CD8-positive, alpha-beta T cell (primary cell): ENCODE measurements at regions of chr1 and their contacts with region 1.

Region 1: GRCh38 chr1:32063261-32063681 is 9.5 kb upstream of the TMEM39B start:
- DNase-seq: peak in 2 of 9 experiments; percentile 45 to 58
- ATAC-seq: peak; percentile 71
- H3K4me3 ChIP-seq: no peak overlapping the region
- H3K4me3 Mint-ChIP-seq: no peak overlapping the region
- H3K27ac ChIP-seq: no peak overlapping the region
- H3K27ac Mint-ChIP-seq: peak overlapping the region; percentile 0
- H3K4me1 ChIP-seq: peaks cover 12% of the 10 kb centered on the region
- H3K4me1 Mint-ChIP-seq: peaks cover 13% of the 10 kb centered on the region
- H3K27me3 ChIP-seq: no peaks in the 10 kb centered on the region
- H3K27me3 Mint-ChIP-seq: no peaks in the 10 kb centered on the region
- CTCF ChIP-seq: peak; percentile 63

Region 2: DNA sequence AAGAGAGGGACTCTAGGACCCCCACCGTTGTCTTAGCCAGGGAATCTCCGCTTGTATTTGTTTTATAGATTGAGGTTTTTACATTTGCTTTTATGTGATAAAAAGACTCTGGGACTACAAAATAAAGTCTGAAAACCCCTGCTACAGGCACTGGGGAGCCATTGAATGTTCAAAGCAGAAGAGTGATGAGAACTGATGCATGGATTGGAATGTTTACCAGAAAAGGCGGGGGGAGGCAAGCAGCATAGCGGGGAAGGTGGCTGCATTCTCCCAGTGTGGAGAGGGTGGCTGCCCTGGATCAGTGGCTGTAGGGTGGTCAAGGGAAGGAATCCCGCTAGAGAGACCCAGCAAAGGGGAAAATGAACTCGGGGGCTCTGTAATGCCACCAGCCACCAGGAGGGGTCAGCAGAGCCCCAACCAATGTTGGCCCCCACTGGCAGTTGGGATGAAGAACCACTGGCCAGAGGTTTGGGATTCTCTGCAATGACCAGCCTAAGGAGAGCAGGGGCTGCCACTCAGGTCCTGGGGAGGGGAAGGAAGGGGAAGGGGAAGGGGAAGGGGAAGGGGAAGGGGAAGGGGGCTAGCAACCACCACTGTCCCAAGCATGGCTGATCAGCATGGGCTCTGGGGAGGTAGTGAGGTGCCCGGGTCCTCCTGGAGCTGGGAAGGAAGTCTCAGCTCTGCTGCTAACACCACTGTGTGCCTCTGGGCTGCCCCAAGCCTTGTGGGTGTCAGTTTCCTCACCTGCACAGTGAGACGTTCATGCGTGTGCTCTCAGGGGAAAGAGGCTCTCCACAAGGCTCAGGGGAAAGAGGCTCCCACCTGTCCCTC is 399.4 kb before region 1 on chr1:
- CTCF ChIA-PET with region 1: interaction called, 7 read pairs
- POLR2A ChIA-PET with region 1: no interaction called
- intact Hi-C with region 1: loop called in 1 of 2 experiments (anchors 1 kb)
- DNase-seq: peak; percentile 18 to 79 (median 59)
- ATAC-seq: peak; percentile 72
- H3K4me3 ChIP-seq: no peak overlapping the region
- H3K4me3 Mint-ChIP-seq: no peak overlapping the region
- H3K27ac ChIP-seq: no peak overlapping the region
- H3K27ac Mint-ChIP-seq: no peak overlapping the region
- H3K4me1 ChIP-seq: no peaks in the 10 kb centered on the region
- H3K4me1 Mint-ChIP-seq: no peaks in the 10 kb centered on the region
- H3K27me3 ChIP-seq: no peaks in the 10 kb centered on the region
- H3K27me3 Mint-ChIP-seq: peaks cover 3% of the 10 kb centered on the region
- CTCF ChIP-seq: peak; percentile 70

Region 3: GRCh38 chr1:31781756-31782371 is 281.4 kb before region 1 on chr1:
- CTCF ChIA-PET with region 1: no interaction called
- POLR2A ChIA-PET with region 1: no interaction called
- intact Hi-C with region 1: no loop called
- DNase-seq: no peak
- ATAC-seq: no peak
- H3K4me3 ChIP-seq: no peak overlapping the region
- H3K4me3 Mint-ChIP-seq: no peak overlapping the region
- H3K27ac ChIP-seq: no peak overlapping the region
- H3K27ac Mint-ChIP-seq: no peak overlapping the region
- H3K4me1 ChIP-seq: no peaks in the 10 kb centered on the region
- H3K4me1 Mint-ChIP-seq: no peaks in the 10 kb centered on the region
- H3K27me3 ChIP-seq: no peaks in the 10 kb centered on the region
- H3K27me3 Mint-ChIP-seq: peaks cover 11% of the 10 kb centered on the region
- CTCF ChIP-seq: no peak

Region 4: DNA sequence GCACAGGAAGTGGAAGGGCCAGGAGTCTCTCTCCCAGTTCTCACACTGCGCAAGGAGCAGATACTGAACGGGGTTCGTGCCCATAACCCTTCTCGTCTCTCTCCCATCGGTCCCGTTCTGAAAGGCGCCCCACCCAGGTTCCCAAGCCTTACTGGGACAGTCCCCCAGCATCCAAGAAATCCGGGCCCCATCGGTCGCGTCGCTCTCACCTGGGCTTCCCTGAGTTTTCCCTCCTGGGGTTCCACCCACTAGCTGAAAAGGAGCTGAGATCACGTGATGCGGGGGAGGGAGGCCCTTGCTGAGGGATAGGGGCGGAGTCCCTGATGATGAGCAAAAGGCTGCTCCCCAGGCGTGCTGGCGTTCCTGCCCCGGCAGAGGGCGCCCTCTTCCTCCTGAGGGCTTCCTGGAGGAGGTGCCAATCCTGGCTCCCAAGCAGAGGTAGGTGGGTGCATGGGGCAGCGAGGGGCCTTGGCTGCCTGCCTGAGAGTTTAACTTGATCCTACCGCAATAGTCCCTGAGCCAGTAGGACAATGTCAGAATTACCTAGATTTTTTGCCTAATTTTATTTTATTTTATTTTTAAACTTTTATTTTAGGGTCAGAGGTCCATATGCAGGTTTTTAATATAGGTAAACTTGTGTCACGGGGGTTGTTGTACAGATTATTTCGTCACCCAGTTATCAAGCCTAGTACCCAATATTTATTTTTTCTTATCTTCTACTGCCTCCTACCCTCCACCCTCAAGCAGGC is 247.3 kb before region 1 on chr1 and contains the start of gene SPOCD1:
- CTCF ChIA-PET with region 1: interaction called, 3 read pairs
- POLR2A ChIA-PET with region 1: interaction called, 5 read pairs
- intact Hi-C with region 1: loop called in 1 of 2 experiments (anchors 2 kb)
- DNase-seq: peak; percentile 66 to 91 (median 83)
- ATAC-seq: peak; percentile 97
- H3K4me3 ChIP-seq: no peak within 1 kb of the TSS
- H3K4me3 Mint-ChIP-seq: no peak within 1 kb of the TSS
- H3K27ac ChIP-seq: peak within 1 kb of the TSS in 1 of 2 experiments; percentile 12
- H3K27ac Mint-ChIP-seq: no peak within 1 kb of the TSS
- H3K4me1 ChIP-seq: no peaks in the 10 kb centered on the region
- H3K4me1 Mint-ChIP-seq: peaks cover 17% of the 10 kb centered on the region
- H3K27me3 ChIP-seq: no peaks in the 10 kb centered on the region
- H3K27me3 Mint-ChIP-seq: no peaks in the 10 kb centered on the region
- CTCF ChIP-seq: peak; percentile 72
- total RNA-seq, gene SPOCD1: not detected

Region 5: DNA sequence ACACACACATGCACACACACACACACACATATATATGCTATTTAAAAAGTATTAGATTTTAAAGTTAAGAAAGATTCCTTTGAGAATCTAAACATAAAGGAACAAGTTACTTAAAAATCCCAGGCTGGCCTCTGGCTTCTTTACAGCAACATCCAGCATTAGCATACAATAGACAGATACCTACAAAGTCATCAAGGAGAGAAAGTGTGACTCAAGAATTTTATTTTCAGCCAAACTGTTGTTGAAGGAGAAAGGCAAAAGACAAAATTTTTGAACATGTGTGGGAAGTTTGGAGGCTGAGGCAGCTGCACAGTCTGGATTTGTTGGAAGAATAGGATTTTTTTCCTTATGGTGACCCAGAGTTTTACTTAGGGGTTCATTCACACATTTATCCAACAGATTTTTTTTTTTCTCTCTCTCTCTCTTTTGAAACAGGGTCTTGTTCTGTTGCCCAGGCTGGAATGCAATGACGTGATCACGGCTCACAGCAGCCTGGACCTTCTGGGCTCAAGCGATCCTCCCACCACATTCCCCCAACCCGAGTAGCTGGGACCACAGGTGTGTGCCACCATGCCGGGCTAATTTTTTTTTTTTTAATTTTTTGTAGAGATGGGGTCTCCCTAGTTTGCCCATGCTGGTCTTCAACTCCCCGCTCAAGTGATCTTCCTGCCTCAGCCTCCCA is 223.5 kb before region 1 on chr1:
- CTCF ChIA-PET with region 1: no interaction called
- POLR2A ChIA-PET with region 1: no interaction called
- intact Hi-C with region 1: no loop called
- DNase-seq: no peak
- ATAC-seq: no peak
- H3K4me3 ChIP-seq: no peak overlapping the region
- H3K4me3 Mint-ChIP-seq: no peak overlapping the region
- H3K27ac ChIP-seq: no peak overlapping the region
- H3K27ac Mint-ChIP-seq: no peak overlapping the region
- H3K4me1 ChIP-seq: peaks cover 18% of the 10 kb centered on the region
- H3K4me1 Mint-ChIP-seq: peaks cover 18% of the 10 kb centered on the region
- H3K27me3 ChIP-seq: no peaks in the 10 kb centered on the region
- H3K27me3 Mint-ChIP-seq: no peaks in the 10 kb centered on the region
- CTCF ChIP-seq: no peak

Region 6: GRCh38 chr1:32052887-32053286 is 10.4 kb before region 1 on chr1:
- CTCF ChIA-PET with region 1: interaction called, 12 read pairs
- POLR2A ChIA-PET with region 1: interaction called, 4 read pairs
- intact Hi-C with region 1: no loop called
- DNase-seq: no peak
- ATAC-seq: no peak
- H3K4me3 ChIP-seq: no peak overlapping the region
- H3K4me3 Mint-ChIP-seq: no peak overlapping the region
- H3K27ac ChIP-seq: no peak overlapping the region
- H3K27ac Mint-ChIP-seq: no peak overlapping the region
- H3K4me1 ChIP-seq: no peaks in the 10 kb centered on the region
- H3K4me1 Mint-ChIP-seq: no peaks in the 10 kb centered on the region
- H3K27me3 ChIP-seq: no peaks in the 10 kb centered on the region
- H3K27me3 Mint-ChIP-seq: no peaks in the 10 kb centered on the region
- CTCF ChIP-seq: no peak

Region 7: DNA sequence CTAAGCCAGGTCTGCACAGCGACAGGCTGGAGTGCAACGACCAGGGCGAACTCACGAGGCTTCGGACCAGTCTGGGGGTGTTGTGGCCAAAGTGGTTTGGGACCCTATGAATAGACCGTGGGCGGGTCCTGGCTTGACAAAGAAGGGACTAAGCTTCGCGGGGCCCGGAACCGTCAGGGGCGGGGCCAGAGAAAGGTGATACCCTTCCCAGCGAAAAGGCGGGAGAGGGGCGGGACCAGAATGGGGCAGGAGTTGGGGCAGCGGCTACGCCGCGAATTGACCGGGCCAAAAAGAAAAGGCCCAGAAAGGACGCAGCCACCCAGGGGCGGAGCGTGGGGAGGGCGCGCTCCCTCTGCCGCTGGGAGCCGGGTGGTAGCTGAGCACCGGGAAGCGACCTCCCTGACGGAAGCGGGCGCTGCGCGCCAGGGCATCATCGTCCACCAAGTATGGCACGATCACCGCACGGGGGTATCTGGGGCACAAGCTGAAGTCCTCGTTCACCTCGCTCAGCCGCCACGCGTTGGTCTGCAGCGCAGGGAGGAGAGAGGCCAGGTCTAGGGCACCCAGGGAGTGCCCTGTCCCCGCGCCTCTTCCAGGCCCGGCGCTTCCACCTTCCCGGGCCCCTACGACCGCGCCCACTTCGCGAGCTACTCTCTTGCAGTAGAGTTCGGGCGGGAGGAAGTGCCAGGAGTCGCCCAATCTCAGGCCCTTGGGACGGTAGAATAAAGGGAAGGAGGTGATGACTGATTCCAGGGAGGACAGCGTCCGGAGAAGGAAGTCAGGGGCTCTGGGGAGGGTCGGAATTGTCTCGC is 177.1 kb after region 1 on chr1:
- CTCF ChIA-PET with region 1: no interaction called
- POLR2A ChIA-PET with region 1: no interaction called
- intact Hi-C with region 1: no loop called
- DNase-seq: peak in 8 of 9 experiments; percentile 26 to 85 (median 76)
- ATAC-seq: peak; percentile 69
- H3K4me3 ChIP-seq: peak overlapping the region; percentile 76 to 89
- H3K4me3 Mint-ChIP-seq: peak overlapping the region; percentile 90
- H3K27ac ChIP-seq: peak overlapping the region; percentile 22 to 49
- H3K27ac Mint-ChIP-seq: peak overlapping the region; percentile 62
- H3K4me1 ChIP-seq: peaks cover 26% of the 10 kb centered on the region
- H3K4me1 Mint-ChIP-seq: peaks cover 23% of the 10 kb centered on the region
- H3K27me3 ChIP-seq: no peaks in the 10 kb centered on the region
- H3K27me3 Mint-ChIP-seq: no peaks in the 10 kb centered on the region
- CTCF ChIP-seq: peak; percentile 24

Region 8: DNA sequence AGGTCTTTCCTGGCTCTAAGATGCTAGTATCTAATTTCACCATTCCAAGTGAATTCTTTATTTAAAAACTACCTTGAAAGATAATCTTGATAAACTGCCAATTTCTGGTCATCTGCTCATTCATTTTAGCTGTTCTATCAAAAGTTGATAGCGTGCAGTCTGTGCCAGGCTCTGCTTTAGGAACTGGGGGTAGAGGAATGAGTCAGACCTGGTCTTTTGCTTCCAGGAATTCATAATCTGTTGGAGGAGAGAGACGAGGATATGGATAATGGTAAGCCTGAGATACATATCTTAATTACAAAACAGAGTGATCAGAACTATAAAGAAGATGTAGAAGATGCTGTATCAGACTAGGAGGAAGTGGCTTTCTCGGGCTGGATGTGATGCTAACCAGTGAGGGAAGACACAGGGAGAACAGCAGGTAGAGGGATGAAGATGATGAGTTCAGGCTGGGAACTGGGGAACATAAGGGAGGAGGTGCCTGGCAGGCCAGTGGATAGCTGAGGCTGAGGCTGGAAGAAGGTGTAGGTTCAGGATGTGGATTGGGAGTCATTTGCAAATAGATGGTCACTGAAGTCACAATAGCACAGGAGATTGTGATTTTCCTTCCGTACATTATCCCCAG is 1379.9 kb after region 1 on chr1:
- CTCF ChIA-PET with region 1: no interaction called
- POLR2A ChIA-PET with region 1: no interaction called
- intact Hi-C with region 1: no loop called
- DNase-seq: no peak
- ATAC-seq: no peak
- H3K4me3 ChIP-seq: no peak overlapping the region
- H3K4me3 Mint-ChIP-seq: no peak overlapping the region
- H3K27ac ChIP-seq: no peak overlapping the region
- H3K27ac Mint-ChIP-seq: no peak overlapping the region
- H3K4me1 ChIP-seq: no peaks in the 10 kb centered on the region
- H3K4me1 Mint-ChIP-seq: no peaks in the 10 kb centered on the region
- H3K27me3 ChIP-seq: peaks cover 0 to 4% of the 10 kb centered on the region in 2 experiments
- H3K27me3 Mint-ChIP-seq: peaks cover 21% of the 10 kb centered on the region
- CTCF ChIP-seq: no peak